Right lobe of liver (tissue), 6 donors: ENCODE measurements at regions of chr1 and their contacts with region 1.

Region 1: DNA sequence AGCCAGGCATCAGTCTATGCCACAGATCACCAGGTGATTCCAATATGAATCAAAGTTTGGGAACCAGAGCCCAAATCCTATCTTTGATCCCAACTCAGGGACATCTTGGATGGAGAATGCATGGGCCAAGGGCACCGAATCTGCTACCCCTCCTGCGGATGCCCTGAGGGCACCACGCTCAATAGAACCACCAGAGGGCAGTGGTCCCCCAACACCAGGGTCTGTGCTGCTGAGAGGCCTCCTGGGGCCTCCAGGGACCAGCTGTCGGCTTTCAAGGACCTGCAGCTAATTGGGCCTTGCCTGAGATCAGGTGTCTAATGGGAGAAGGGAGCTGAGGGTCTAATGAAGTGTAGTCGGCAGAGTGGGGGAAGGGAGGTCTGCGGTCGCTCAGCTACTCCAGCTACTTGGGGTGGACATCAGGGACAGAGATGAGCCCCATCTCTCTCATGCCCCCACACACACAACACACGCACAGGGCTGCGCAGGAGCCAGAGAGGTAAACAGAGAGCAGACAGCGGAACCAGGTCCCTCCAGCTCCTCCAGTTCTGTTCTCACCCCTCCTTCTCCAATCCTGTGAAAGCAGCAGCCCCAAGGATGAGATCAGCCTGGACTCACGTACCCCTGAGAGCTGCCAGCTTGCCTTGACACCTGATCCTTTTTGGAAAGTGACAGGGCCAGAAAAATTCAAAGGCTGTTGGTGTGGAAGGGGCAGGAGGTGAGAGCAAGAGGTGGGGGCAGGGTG is 34.9 kb upstream of the PPP1R15B start:
- DNase-seq: peak; percentile 67 to 74 (median 72)
- ATAC-seq: peak; percentile 70 to 76 (median 74)
- H3K4me3 ChIP-seq: no peak overlapping the region
- H3K27ac ChIP-seq: no peak overlapping the region
- H3K4me1 ChIP-seq: peaks cover 0 to 25% (median 9%) of the 10 kb centered on the region in 4 donors
- H3K27me3 ChIP-seq: no peaks in the 10 kb centered on the region
- CTCF ChIP-seq: peak; percentile 64 to 85 (median 84)
- POLR2A ChIP-seq: no peak

Region 2: GRCh38 chr1:204286831-204287421 is 159.6 kb before region 1 on chr1:
- intact Hi-C with region 1: no loop called
- DNase-seq: peak; percentile 65 to 86 (median 81)
- ATAC-seq: peak; percentile 72 to 80 (median 78)
- H3K4me3 ChIP-seq: peak overlapping the region; percentile 33 to 62 (median 60)
- H3K27ac ChIP-seq: peak overlapping the region; percentile 71 to 82 (median 72)
- H3K4me1 ChIP-seq: peaks cover 0 to 41% (median 19%) of the 10 kb centered on the region in 4 donors
- H3K27me3 ChIP-seq: no peaks in the 10 kb centered on the region
- CTCF ChIP-seq: peak in 3 of 4 donors; percentile 10 to 33 (median 19)
- POLR2A ChIP-seq: peak; percentile 27

Region 3: DNA sequence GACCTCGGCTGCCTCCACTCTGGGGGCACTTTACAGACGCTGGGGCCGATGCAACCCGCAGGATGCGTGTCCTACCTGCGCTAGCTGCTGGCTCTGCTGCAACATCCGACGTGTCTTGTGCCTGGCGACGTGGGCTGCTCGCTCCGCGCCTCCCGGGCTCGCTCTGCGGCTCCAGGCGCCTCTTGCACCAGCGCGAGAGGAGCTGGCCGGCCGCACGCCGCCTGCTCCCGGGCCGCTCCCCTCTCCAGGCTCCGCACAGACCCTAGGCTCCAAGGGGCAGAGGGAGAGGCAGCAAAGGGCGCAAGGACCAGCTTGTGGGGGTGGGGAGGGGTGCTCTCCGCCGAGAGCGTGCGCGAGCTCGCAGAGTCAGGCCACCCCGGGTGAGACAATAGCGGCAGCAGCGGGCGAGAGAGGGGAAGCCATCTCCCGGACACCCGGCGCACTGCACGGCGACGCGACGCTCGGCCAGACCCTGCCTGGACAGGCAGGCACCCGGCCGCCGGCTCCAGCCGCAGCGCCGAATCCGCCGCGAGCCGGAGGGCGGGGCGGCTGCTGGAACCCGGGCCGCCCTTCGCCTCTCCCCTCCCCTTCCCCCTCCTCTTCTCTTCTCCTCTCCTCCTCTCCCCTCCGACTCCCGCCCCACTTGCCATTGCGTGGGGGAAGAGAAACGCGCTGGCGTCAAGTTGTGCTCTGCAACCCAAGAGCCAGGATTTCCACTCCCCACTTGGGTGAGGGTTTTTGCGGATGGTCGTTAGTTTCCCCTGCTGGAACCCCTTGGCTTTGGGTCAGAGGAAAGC is 47.9 kb after region 1 on chr1 and contains the start of gene PIK3C2B:
- intact Hi-C with region 1: loop called in 1 of 2 experiments (anchors 5 kb)
- DNase-seq: peak; percentile 85 to 89 (median 88)
- ATAC-seq: peak; percentile 86 to 92 (median 88)
- H3K4me3 ChIP-seq: peak within 1 kb of the TSS; percentile 74 to 82 (median 81)
- H3K27ac ChIP-seq: peak within 1 kb of the TSS; percentile 80 to 93 (median 87)
- H3K4me1 ChIP-seq: peaks cover 0 to 13% (median 4%) of the 10 kb centered on the region in 4 donors
- H3K27me3 ChIP-seq: no peaks in the 10 kb centered on the region
- CTCF ChIP-seq: peak; percentile 39 to 63 (median 44)
- POLR2A ChIP-seq: peak; percentile 76
- total RNA-seq, gene PIK3C2B: 7.6 to 18.5 (median 10.1) TPM

Region 4: DNA sequence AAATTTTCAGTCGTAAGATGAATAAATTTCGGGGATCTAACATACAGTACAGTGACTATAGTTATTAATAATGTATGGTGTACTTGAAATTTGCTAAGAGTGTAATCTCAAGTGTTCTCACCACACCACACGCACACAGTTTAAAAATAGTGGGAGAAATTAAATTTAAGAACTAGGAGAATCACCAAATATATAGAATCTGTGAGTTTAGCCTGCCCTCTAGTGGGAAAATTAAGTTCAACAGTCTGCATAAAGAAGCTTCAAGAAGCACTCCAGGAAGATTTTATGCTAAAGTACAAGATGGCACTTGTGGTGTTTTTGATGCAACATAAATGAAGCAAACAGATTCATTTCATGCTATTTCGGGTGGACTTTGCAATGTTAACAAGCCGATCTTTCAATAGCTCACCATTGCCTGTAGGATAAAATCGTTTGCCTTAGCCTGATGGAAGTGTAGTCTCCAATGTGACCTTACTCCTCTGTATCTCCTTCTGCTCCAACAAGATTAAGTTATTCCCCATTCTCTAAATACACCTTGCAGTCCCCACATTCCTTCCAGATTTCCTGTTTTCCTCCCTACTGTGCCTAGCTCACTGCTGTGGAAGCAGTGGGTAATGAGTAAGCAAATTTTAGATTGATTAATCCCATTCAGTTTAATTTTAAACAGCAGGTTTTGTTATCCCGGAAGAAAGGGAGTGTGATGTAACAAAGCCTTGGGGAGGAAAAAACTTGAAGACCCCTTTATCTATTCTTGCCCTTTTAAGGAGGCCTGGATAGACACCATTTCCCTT is 56.8 kb after region 1 on chr1:
- intact Hi-C with region 1: loop called in 1 of 2 experiments (anchors 5 kb)
- DNase-seq: no peak
- ATAC-seq: peak; percentile 21 to 48 (median 42)
- H3K4me3 ChIP-seq: no peak overlapping the region
- H3K27ac ChIP-seq: peak overlapping the region in 2 of 3 donors; percentile 25 to 52
- H3K4me1 ChIP-seq: peaks cover 0 to 26% (median 11%) of the 10 kb centered on the region in 4 donors
- H3K27me3 ChIP-seq: no peaks in the 10 kb centered on the region
- CTCF ChIP-seq: peak; percentile 75 to 88 (median 80)
- POLR2A ChIP-seq: no peak

Region 5: DNA sequence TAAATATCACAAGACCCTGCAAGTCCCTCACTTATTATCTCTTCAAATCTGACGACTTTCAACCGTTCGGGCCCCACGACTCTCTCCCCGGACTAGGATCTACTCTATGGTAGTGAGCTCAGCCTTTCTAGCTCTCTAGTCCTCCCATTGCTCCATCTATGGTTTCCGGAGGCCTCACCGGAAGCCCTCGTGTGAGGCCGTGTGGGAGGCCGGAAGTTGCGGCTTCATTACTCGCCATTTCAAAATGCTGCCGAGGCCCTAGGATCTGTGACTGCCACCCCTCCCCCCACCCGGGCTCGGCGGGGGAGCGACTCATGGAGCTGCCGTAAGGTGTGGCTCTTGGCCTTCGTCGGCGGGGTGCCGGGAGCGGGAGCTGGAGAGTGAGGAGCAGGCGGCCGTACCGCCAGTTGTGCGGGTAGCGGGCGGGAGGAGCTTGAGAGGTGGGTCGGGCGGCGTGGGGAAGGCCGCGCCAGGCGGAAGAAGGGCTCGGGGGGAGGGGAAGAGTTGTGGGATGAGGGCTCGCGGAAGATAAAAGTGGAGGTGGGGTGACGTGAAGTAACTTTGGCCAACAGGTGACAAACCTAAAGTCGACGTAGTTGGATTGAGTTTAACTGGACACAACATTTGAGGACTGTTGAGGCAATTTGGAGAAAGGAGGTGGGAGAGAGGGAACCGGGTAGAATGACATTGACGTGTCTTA is 69.8 kb after region 1 on chr1 and contains the start of gene MDM4:
- intact Hi-C with region 1: no loop called
- DNase-seq: peak; percentile 90 to 95 (median 93)
- ATAC-seq: peak; percentile 95 to 98 (median 96)
- H3K4me3 ChIP-seq: peak within 1 kb of the TSS; percentile 64 to 80 (median 70)
- H3K27ac ChIP-seq: peak within 1 kb of the TSS; percentile 80 to 94 (median 90)
- H3K4me1 ChIP-seq: peaks cover 0 to 15% (median 0%) of the 10 kb centered on the region in 4 donors
- H3K27me3 ChIP-seq: no peaks in the 10 kb centered on the region
- CTCF ChIP-seq: no peak
- POLR2A ChIP-seq: peak; percentile 92
- total RNA-seq, gene MDM4: 21.0 to 37.6 (median 25.3) TPM